AG04449 (cell line): ENCODE measurements at regions of chr17 and their contacts with region 1.

Region 1: DNA sequence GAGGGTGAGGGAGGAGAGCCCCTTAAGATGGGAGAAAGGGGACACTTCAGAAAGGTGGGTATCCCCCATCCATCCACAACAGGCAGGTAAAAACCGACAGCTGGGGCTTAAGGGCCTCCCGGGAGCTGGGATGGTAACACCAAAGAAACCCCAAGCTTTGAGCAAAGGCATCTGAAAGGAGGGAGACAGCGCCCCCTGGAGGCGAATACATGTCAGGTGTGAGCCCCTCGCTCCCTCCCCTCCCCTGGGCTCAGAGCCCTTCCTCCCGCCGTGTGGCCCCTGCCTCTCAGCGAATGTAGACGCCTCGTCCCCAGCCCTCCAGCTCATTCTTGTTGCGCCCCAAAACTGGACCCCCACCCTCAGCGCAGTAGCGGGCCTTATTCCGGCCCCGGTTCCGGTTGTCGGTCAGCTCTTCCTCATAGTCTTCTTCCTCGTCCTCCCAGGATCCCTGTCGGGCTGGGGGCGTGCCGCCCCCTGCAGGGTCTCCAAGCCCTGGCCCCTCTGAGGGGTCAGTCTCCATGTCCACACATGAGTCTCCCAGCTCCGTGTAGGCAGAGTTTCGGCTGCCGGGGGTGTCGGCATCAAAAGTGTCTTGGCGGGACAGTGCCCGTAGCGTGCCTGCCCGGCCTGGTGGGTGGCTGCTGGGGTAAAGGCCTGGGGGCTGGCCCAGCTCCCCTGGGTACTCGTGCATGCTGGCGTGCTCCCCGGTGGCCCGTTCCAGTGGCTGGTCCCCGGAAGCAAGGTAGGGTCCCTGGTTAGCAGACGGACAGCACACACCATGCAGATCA is 9.1 kb upstream of the ARL5C start:
- DNase-seq: no peak
- H3K4me3 ChIP-seq: no peak overlapping the region
- CTCF ChIP-seq: peak; percentile 87

Region 2: DNA sequence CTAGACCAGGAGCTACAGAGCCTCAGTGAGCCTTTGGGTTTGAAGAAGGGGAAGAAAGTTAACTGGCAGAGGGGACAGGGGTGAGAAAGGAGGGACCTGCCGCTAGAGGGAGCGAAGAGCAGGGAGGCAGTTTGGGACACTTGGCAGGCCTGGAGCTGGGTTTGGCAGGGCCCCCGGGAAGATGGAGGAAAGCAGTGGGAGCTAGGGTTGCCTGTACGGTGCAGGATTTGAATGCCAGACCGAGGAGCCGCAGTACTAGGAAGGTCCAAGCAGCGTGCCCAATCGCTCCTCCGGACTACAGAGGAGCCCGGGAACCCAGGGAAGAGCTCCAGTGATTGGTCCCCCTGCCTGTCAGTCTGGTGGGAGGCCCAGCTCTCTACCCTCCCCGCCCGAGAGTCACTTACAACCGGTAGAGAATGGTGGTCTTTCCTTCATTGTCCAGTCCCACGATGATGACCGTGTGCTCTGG is 10.4 kb before region 1 on chr17:
- CTCF ChIA-PET with region 1: interaction called, 208 read pairs
- POLR2A ChIA-PET with region 1: interaction called, 5 read pairs
- DNase-seq: no peak
- H3K4me3 ChIP-seq: peak overlapping the region; percentile 55
- CTCF ChIP-seq: peak; percentile 93

Region 3: DNA sequence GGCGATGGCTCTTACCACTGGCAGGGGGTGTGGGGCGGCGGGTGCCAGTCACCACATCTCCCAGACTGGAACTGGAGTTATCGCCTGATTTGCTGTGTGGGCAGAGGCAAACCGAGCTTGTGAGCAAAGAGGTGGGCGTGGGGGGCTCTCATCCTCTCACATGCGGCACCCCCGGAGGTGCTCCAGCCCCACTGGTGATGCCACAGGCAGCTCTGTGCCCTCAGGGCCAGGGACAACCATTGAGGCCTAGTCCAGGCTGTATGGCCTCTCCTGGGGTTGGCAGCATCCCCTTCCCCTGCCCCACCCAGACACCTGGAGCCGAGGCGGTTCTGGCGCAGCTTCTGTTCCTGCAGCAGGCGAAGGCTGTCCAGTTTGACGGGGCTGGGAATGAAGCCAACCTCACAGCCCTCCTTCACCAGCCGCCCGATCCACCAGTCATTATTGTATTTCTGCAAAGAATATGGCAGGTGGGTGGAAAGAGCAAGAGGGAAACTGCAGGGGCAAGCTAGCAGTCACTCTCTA is 11.4 kb after region 1 on chr17:
- CTCF ChIA-PET with region 1: interaction called, 76 read pairs
- POLR2A ChIA-PET with region 1: interaction called, 3 read pairs
- DNase-seq: no peak
- H3K4me3 ChIP-seq: no peak overlapping the region
- CTCF ChIP-seq: no peak

Region 4: DNA sequence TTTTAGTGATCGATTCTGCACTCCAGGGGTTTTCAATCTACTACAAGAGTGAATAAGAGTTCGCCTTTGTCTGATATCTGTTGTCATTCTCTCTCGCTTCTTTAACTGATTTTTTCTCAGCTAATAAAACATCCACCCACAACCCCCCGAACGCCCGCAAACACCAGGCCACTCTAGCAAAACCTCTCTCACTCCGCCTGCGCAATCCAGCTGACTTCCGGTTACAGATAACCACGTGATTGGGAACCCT is 24.6 kb after region 1 on chr17:
- CTCF ChIA-PET with region 1: interaction called, 76 read pairs
- POLR2A ChIA-PET with region 1: interaction called, 4 read pairs
- DNase-seq: peak; percentile 73
- H3K4me3 ChIP-seq: peak overlapping the region; percentile 95
- CTCF ChIP-seq: no peak